Activated CD4-positive, alpha-beta memory T cell treated with anti-CD3 and anti-CD28 coated beads for 36 hours (primary cell): ENCODE measurements at regions of chr2 and their contacts with region 1.

Region 1: GRCh38 chr2:48420512-48421197 is 109.3 kb upstream of the STON1 start:
- DNase-seq: peak; percentile 97
- H3K4me3 Mint-ChIP-seq: no peak overlapping the region
- H3K27ac Mint-ChIP-seq: peak overlapping the region; percentile 51
- H3K4me1 Mint-ChIP-seq: peaks cover 27% of the 10 kb centered on the region
- H3K27me3 Mint-ChIP-seq: peaks cover 6% of the 10 kb centered on the region

Region 2: GRCh38 chr2:48107326-48107925 is 313.2 kb before region 1 on chr2:
- CTCF ChIA-PET with region 1: interaction called, 6 read pairs
- POLR2A ChIA-PET with region 1: no interaction called
- intact Hi-C with region 1: loop called (anchors 1 kb)
- DNase-seq: no peak
- H3K4me3 Mint-ChIP-seq: no peak overlapping the region
- H3K27ac Mint-ChIP-seq: no peak overlapping the region
- H3K4me1 Mint-ChIP-seq: peaks cover 26% of the 10 kb centered on the region
- H3K27me3 Mint-ChIP-seq: no peaks in the 10 kb centered on the region

Region 3: GRCh38 chr2:48248241-48248933 is 172.3 kb before region 1 on chr2:
- CTCF ChIA-PET with region 1: no interaction called
- POLR2A ChIA-PET with region 1: no interaction called
- intact Hi-C with region 1: loop called (anchors 5 kb)
- DNase-seq: peak; percentile 38
- H3K4me3 Mint-ChIP-seq: no peak overlapping the region
- H3K27ac Mint-ChIP-seq: no peak overlapping the region
- H3K4me1 Mint-ChIP-seq: peaks cover 14% of the 10 kb centered on the region
- H3K27me3 Mint-ChIP-seq: no peaks in the 10 kb centered on the region

Region 4: GRCh38 chr2:48343571-48344440 is 76.8 kb before region 1 on chr2:
- CTCF ChIA-PET with region 1: interaction called, 4 read pairs
- POLR2A ChIA-PET with region 1: no interaction called
- intact Hi-C with region 1: loop called (anchors 1 kb)
- DNase-seq: no peak
- H3K4me3 Mint-ChIP-seq: peak overlapping the region; percentile 17
- H3K27ac Mint-ChIP-seq: peak overlapping the region; percentile 46
- H3K4me1 Mint-ChIP-seq: peaks cover 42% of the 10 kb centered on the region
- H3K27me3 Mint-ChIP-seq: no peaks in the 10 kb centered on the region

Region 5: DNA sequence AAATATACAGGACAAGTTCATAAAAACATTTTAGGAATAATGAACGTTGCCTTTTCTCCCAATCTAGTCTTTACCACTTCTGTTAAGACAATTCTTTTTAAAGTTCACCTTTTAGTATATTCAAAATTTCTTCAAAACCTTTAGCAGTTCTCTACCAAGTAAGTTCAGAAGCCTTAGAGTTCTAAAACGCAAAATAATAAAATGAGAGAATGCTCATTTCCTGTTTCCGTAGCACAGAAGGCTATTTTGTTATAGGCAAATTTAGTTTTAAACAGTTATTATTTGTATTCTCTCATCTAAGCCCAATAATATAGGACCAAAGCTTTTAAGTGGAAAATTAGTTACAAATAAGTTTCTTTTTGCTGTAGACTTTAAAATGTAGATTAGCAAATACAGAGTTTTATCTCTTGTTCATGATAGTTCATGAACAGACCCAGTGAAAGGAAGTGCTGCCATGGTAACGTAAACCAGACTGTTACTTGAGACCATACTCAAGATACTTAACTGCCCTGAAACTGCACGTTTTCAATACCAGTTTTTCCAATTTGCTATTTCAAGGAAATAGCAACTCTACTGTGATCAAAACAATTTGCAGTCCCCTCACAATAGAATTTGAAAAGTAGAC is 63.8 kb before region 1 on chr2:
- CTCF ChIA-PET with region 1: no interaction called
- POLR2A ChIA-PET with region 1: no interaction called
- intact Hi-C with region 1: loop called (anchors 5 kb)
- DNase-seq: no peak
- H3K4me3 Mint-ChIP-seq: peak overlapping the region; percentile 41
- H3K27ac Mint-ChIP-seq: peak overlapping the region; percentile 85
- H3K4me1 Mint-ChIP-seq: peaks cover 56% of the 10 kb centered on the region
- H3K27me3 Mint-ChIP-seq: no peaks in the 10 kb centered on the region

Region 6: GRCh38 chr2:48471048-48471474 is 50.4 kb after region 1 on chr2:
- CTCF ChIA-PET with region 1: no interaction called
- POLR2A ChIA-PET with region 1: no interaction called
- intact Hi-C with region 1: no loop called
- DNase-seq: no peak
- H3K4me3 Mint-ChIP-seq: no peak overlapping the region
- H3K27ac Mint-ChIP-seq: no peak overlapping the region
- H3K4me1 Mint-ChIP-seq: no peaks in the 10 kb centered on the region
- H3K27me3 Mint-ChIP-seq: no peaks in the 10 kb centered on the region